ENCODE measurements at regions of chr10 and their contacts with region 1.

Region 1: GRCh38 chr10:12195603-12196506 is at the starts of genes CDC123 and NUDT5:
- DNase-seq: peak; percentile 94
- H3K4me3 ChIP-seq: peak within 1 kb of the TSS; percentile 93
- H3K27ac ChIP-seq: peak within 1 kb of the TSS; percentile 98
- H3K4me1 ChIP-seq: peaks cover 23% of the 10 kb centered on the region
- H3K27me3 ChIP-seq: no peaks in the 10 kb centered on the region
- CTCF ChIP-seq: no peak
- total RNA-seq, gene CDC123: 189 and 207 TPM in 2 replicates
- total RNA-seq, gene NUDT5: 133 and 137 TPM in 2 replicates

Region 2: DNA sequence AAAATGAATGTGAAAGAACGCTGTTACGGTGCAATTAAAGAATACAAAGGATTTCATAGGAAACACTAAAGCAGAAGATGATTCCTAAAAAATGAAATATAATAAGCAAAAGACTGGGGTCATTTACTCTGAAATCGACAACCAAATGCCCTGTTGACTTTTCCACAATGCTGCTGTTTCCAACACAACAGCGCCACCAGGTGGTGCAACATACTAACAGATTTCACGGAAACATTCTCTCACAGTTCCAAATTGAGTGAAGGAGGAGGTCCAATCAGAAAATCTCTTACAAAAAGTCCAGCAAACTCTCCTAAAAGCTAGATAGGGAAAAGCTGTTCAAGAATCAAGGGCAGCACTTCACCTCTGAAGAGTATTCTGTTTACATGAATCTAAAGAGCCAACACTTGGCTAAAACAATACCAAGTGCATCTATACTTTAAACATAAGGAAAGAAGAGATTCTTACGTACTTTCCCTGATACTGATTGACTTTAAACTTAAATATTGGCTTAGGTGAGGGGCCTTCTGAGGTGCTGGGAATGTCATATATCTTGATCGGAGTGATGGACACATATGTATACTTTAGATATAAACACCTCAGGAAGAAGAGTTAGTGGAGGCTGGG is 209.2 kb before region 1 on chr10:
- CTCF ChIA-PET with region 1: no interaction called
- POLR2A ChIA-PET with region 1: no interaction called
- intact Hi-C with region 1: no loop called
- DNase-seq: peak; percentile 87
- H3K4me3 ChIP-seq: no peak overlapping the region
- H3K27ac ChIP-seq: no peak overlapping the region
- H3K4me1 ChIP-seq: no peaks in the 10 kb centered on the region
- H3K27me3 ChIP-seq: no peaks in the 10 kb centered on the region
- CTCF ChIP-seq: peak; percentile 92

Region 3: GRCh38 chr10:12018438-12019282 is 177.2 kb before region 1 on chr10:
- CTCF ChIA-PET with region 1: no interaction called
- POLR2A ChIA-PET with region 1: no interaction called
- intact Hi-C with region 1: no loop called
- DNase-seq: no peak
- H3K4me3 ChIP-seq: no peak overlapping the region
- H3K27ac ChIP-seq: no peak overlapping the region
- H3K4me1 ChIP-seq: no peaks in the 10 kb centered on the region
- H3K27me3 ChIP-seq: no peaks in the 10 kb centered on the region
- CTCF ChIP-seq: no peak

Region 4: DNA sequence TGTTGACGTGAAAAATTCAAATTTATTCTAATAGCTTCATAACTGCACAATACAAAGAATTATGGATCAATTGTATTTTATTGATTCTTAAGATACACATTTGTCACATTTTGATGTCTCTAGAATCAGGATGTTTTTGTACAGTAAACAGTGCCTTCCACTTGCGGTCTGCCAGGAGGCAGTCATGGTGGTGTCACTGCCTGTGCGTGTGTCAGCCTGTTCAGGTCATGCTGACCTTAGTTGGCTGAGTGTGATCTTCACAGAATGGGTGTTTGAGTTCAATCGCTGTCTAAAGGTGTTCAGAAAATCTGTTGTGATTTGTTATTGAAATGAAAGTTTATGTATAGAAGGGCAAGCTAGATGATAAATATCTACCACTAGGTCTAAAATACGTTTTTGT is 45.7 kb before region 1 on chr10:
- CTCF ChIA-PET with region 1: no interaction called
- POLR2A ChIA-PET with region 1: interaction called, 11 read pairs
- intact Hi-C with region 1: no loop called
- DNase-seq: no peak
- H3K4me3 ChIP-seq: no peak overlapping the region
- H3K27ac ChIP-seq: no peak overlapping the region
- H3K4me1 ChIP-seq: no peaks in the 10 kb centered on the region
- H3K27me3 ChIP-seq: no peaks in the 10 kb centered on the region
- CTCF ChIP-seq: no peak

Measured in A673 (cell line).